AG04449 (cell line): ENCODE measurements at regions of chr6 and their contacts with region 1.

Region 1: DNA sequence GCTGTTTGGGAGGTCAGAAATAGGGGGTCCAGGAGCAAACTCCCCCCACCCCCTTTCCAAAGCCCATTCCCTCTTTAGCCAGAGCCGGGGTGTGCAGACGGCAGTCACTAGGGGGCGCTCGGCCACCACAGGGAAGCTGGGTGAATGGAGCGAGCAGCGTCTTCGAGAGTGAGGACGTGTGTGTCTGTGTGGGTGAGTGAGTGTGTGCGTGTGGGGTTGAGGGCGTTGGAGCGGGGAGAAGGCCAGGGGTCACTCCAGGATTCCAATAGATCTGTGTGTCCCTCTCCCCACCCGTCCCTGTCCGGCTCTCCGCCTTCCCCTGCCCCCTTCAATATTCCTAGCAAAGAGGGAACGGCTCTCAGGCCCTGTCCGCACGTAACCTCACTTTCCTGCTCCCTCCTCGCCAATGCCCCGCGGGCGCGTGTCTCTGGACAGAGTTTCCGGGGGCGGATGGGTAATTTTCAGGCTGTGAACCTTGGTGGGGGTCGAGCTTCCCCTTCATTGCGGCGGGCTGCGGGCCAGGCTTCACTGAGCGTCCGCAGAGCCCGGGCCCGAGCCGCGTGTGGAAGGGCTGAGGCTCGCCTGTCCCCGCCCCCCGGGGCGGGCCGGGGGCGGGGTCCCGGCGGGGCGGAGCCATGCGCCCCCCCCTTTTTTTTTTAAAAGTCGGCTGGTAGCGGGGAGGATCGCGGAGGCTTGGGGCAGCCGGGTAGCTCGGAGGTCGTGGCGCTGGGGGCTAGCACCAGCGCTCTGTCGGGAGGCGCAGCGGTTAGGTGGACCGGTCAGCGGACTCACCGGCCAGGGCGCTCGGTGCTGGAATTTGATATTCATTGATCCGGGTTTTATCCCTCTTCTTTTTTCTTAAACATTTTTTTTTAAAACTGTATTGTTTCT is at the start of gene VEGFA:
- DNase-seq: peak; percentile 77
- H3K4me3 ChIP-seq: peak within 1 kb of the TSS; percentile 98
- CTCF ChIP-seq: peak; percentile 99

Region 2: DNA sequence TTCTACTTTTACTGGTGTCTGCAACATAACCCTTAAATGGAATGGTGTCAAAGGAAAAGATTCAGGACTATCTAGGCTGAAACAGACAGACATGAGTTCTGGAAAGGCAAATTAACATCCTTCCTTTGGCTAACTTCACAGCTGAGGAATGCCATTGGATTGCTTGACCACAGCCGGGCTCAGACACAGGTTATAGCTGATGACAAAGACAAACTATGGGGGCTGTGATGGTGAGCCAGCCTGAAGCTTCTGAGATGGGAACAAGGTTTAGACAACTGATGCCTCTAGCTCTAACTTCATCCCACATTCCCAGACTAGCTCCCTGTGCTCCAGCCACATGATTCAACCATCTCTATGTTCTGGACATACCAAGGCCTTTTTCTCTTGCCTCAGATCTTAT is 237.6 kb before region 1 on chr6:
- CTCF ChIA-PET with region 1: no interaction called
- POLR2A ChIA-PET with region 1: no interaction called
- DNase-seq: no peak
- H3K4me3 ChIP-seq: no peak overlapping the region
- CTCF ChIP-seq: no peak

Region 3: GRCh38 chr6:43629505-43630300 is 140.1 kb before region 1 on chr6:
- CTCF ChIA-PET with region 1: interaction called, 12 read pairs
- POLR2A ChIA-PET with region 1: interaction called, 9 read pairs
- DNase-seq: peak; percentile 89
- H3K4me3 ChIP-seq: peak overlapping the region; percentile 91
- CTCF ChIP-seq: no peak

Region 4: DNA sequence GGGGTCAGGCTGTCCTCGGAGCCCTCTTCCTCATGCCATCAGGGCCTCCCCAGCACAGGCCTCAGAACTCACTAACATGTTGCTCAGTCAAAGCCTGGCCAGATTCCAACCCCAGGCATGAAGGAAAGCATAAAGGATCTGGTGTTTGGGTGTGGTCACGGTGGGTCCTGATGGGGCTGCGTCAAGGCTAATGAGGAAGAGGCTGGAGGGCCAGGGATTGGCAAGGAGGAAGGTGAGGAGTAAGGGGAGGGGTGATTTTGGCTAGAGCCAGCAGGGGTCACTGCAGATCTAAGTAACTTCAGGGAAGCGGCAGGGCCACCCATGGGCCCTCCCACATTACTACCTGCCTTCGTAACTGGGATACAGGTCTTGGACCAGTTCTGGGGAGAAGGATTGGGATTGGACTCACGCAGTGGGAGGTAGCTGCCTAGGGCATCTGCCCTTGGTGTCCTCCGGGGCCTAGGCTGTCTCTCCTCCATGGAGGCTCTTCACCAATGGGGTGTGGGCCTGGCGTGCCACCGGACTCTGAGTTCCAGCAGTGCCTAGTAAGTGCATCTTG is 46.0 kb before region 1 on chr6:
- CTCF ChIA-PET with region 1: interaction called, 36 read pairs
- POLR2A ChIA-PET with region 1: interaction called, 6 read pairs
- DNase-seq: no peak
- H3K4me3 ChIP-seq: no peak overlapping the region
- CTCF ChIP-seq: peak; percentile 65

Region 5: GRCh38 chr6:43781941-43782704 is 12.4 kb after region 1 on chr6:
- CTCF ChIA-PET with region 1: interaction called, 24 read pairs
- POLR2A ChIA-PET with region 1: interaction called, 19 read pairs
- DNase-seq: no peak
- H3K4me3 ChIP-seq: no peak overlapping the region
- CTCF ChIP-seq: no peak

Region 6: GRCh38 chr6:43951063-43951755 is 181.4 kb after region 1 on chr6:
- CTCF ChIA-PET with region 1: interaction called, 80 read pairs
- POLR2A ChIA-PET with region 1: interaction called, 15 read pairs
- DNase-seq: no peak
- H3K4me3 ChIP-seq: no peak overlapping the region
- CTCF ChIP-seq: peak; percentile 63

Region 7: GRCh38 chr6:44041461-44042260 is 271.9 kb after region 1 on chr6:
- CTCF ChIA-PET with region 1: interaction called, 8 read pairs
- POLR2A ChIA-PET with region 1: interaction called, 18 read pairs
- DNase-seq: peak; percentile 99
- H3K4me3 ChIP-seq: no peak overlapping the region; the same call in 1 of the 2 replicates
- CTCF ChIP-seq: no peak